ENCODE measurements at regions of chr4 and their contacts with region 1.

Region 1: GRCh38 chr4:155837203-155837796 is 28.8 kb downstream of the ASIC5 start:
- DNase-seq: no peak
- H3K4me3 ChIP-seq: no peak overlapping the region
- H3K27ac ChIP-seq: no peak overlapping the region
- H3K4me1 ChIP-seq: no peaks in the 10 kb centered on the region
- H3K27me3 ChIP-seq: no peaks in the 10 kb centered on the region
- CTCF ChIP-seq: no peak

Region 2: GRCh38 chr4:155929833-155930232 is 92.5 kb after region 1 on chr4:
- CTCF ChIA-PET with region 1: no interaction called
- dilution Hi-C with region 1: no loop called
- in situ Hi-C with region 1: no loop called
- intact Hi-C with region 1: loop called (anchors 10 kb)
- DNase-seq: no peak
- H3K4me3 ChIP-seq: no peak overlapping the region
- H3K27ac ChIP-seq: no peak overlapping the region
- H3K4me1 ChIP-seq: no peaks in the 10 kb centered on the region
- H3K27me3 ChIP-seq: no peaks in the 10 kb centered on the region
- CTCF ChIP-seq: no peak

Measured in mammary epithelial cell (primary cell).